Posterior vena cava (tissue), 2 donors: ENCODE measurements at regions of chr15 and their contacts with region 1.

Region 1: GRCh38 chr15:57213862-57214261 is 162.4 kb upstream of the CGNL1 start:
- DNase-seq: no peak

Region 2: GRCh38 chr15:57146506-57147201 is 67.2 kb before region 1 on chr15:
- intact Hi-C with region 1: loop called (anchors 5 to 10 kb)
- DNase-seq: no peak

Region 3: GRCh38 chr15:57152666-57153539 is 61.0 kb before region 1 on chr15:
- intact Hi-C with region 1: loop called (anchors 5 to 10 kb)
- DNase-seq: no peak

Region 4: DNA sequence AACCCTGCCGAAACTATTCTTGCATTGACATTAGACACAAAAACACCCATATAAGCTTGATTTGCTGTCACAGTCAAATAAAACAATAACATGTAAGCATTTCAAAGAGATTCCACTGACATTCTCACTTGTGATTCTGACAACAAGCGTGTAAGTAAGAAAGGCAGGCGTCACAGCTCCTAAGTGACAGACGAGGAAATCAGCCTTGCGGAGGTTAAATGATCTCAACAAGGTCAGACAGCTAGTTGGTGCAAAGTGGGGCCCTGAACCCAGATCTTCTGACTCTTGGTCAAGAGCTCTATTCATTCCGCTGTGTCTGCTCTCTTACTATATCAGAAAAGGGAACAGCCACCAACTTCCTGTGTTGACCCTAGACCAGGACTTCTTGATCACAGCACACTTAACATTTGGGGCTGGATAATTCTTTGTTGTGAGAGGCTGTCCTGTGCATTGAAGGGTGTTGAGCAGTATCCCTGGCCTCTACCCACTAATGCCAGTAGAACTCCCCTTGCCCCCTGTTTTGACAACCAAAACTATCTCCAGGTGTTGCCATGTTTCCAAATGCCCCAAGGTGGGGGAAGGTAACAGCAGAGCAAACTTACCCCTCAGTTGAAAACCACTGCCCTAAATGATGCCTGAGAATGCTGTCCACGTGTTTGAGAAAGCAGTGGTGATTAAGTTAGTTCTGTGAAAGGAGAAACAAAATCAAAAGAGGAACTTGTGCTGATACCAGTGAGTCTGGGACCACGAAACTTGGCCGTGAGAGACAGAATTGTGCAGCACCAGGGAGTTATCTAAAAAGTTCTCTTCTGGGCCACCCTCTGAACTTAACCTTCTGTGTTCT is 1304.0 kb after region 1 on chr15:
- intact Hi-C with region 1: no loop called
- DNase-seq: no peak